CD8-positive, alpha-beta memory T cell (primary cell): ENCODE measurements at regions of chr14 and their contacts with region 1.

Region 1: DNA sequence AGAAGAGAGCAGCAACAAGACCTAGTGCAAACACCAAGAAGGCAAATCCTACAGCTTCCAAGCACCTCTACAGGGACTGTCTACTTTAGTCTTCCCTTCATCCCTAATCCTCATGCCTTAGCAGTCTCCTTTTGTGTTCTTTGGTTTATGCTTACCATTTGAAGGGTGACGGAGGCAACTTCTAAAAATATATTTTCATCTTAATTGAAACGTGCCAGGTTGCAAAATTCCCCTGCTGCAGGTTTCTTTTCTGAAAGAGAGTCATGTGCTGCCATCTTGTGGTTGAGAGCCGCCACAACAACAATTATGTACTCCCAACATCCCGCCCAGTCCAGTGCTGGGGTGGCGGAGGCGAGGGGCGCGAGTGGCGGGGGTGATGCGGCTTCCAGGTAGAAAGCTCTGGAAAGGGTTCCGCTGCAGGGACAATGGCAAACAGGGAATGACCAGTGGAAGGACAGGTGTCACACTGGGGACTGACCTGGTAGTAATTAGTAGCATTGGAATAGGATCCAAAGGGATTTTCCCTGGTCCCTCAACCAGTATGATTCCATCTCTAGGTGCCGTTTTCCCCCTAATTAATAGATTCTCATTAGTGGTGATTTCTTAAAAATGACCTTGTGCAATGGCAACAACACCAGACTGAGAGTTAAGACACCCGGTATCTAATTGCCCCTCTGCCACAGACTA is 80.3 kb upstream of the GNG2 start:
- DNase-seq: peak; percentile 53 to 80 (median 59)
- H3K4me3 ChIP-seq: no peak overlapping the region
- H3K4me3 Mint-ChIP-seq: peak overlapping the region in 4 of 7 donors; percentile 25 to 42 (median 28)
- H3K27ac ChIP-seq: no peak overlapping the region
- H3K27ac Mint-ChIP-seq: peak overlapping the region in 1 of 8 donors; percentile 12
- H3K4me1 ChIP-seq: peaks cover 10% of the 10 kb centered on the region
- H3K4me1 Mint-ChIP-seq: peaks cover 11 to 16% (median 15%) of the 10 kb centered on the region in 3 donors
- H3K27me3 ChIP-seq: no peaks in the 10 kb centered on the region
- H3K27me3 Mint-ChIP-seq: peaks cover 18 to 51% of the 10 kb centered on the region in 2 donors

Region 2: GRCh38 chr14:51564967-51565795 is 215.0 kb before region 1 on chr14:
- CTCF ChIA-PET with region 1: no interaction called
- POLR2A ChIA-PET with region 1: no interaction called
- DNase-seq: no peak
- H3K4me3 ChIP-seq: no peak overlapping the region
- H3K4me3 Mint-ChIP-seq: no peak overlapping the region
- H3K27ac ChIP-seq: no peak overlapping the region
- H3K27ac Mint-ChIP-seq: peak overlapping the region in 1 of 8 donors; percentile 67
- H3K4me1 ChIP-seq: peaks cover 10% of the 10 kb centered on the region
- H3K4me1 Mint-ChIP-seq: peaks cover 11 to 21% (median 14%) of the 10 kb centered on the region in 3 donors
- H3K27me3 ChIP-seq: no peaks in the 10 kb centered on the region
- H3K27me3 Mint-ChIP-seq: peaks cover 7 to 16% of the 10 kb centered on the region in 2 donors

Region 3: GRCh38 chr14:51805541-51805940 is 25.4 kb after region 1 on chr14:
- CTCF ChIA-PET with region 1: interaction called, 11 read pairs
- POLR2A ChIA-PET with region 1: no interaction called
- DNase-seq: no peak
- H3K4me3 ChIP-seq: no peak overlapping the region
- H3K4me3 Mint-ChIP-seq: no peak overlapping the region
- H3K27ac ChIP-seq: no peak overlapping the region
- H3K27ac Mint-ChIP-seq: no peak overlapping the region
- H3K4me1 ChIP-seq: no peaks in the 10 kb centered on the region
- H3K4me1 Mint-ChIP-seq: no peaks in the 10 kb centered on the region
- H3K27me3 ChIP-seq: no peaks in the 10 kb centered on the region
- H3K27me3 Mint-ChIP-seq: peaks cover 3 to 10% of the 10 kb centered on the region in 2 donors